Dendritic cell treated with granulocyte-macrophage colony-stimulating factor and Interleukin-4, amounts not matched to agents 40 ng/mL and 50 ng/mL, for 4 days (primary cell): ENCODE measurements at regions of chr1 and their contacts with region 1.

Region 1: GRCh38 chr1:222455188-222455879 is 92.6 kb downstream of the HHIPL2 start:
- H3K4me3 Mint-ChIP-seq: no peak overlapping the region
- H3K27ac Mint-ChIP-seq: no peak overlapping the region
- H3K4me1 Mint-ChIP-seq: no peaks in the 10 kb centered on the region
- H3K27me3 Mint-ChIP-seq: peaks cover 2% of the 10 kb centered on the region

Region 2: DNA sequence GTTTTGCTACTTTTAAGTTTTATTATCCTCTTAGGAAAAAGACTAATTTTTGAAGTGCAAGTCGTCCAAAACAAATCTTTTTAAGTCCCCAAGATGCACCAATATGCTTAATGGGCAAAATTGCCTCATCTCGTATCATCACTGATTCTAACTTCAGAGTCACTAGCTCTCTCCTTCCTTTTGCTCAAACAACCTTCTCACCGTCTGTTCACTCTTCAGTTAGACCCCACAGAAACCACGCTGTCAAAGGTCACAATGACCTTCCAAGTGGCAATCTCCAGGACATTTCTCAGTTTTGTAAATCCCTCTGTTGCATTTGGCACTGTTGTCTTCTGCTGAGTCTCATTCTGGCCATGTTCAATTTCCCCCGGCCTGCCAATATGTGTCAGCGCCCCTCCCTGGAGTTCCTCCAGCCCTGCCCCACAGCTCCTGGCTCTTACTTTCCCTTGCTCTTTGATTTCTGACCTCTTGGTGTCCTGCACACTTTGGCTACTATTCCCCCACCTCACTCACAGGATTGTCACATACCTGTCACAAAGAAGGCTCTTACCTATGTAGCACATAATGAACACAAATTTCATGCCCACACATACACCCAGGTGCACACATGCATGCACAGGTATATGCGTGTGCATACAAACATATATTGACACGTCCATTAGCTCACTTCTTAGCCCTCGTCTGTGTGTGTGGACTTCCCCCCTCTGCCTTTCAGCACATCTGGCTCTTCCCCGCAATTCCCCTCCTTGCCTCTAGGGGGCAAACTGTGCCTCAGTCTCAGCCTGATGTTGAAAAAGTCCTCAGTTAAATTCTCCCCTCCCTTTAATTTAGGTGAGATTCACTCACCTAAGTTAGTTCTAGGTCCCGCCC is 359.5 kb before region 1 on chr1:
- intact Hi-C with region 1: loop called (anchors 1 kb)
- H3K4me3 Mint-ChIP-seq: no peak overlapping the region
- H3K27ac Mint-ChIP-seq: no peak overlapping the region
- H3K4me1 Mint-ChIP-seq: no peaks in the 10 kb centered on the region
- H3K27me3 Mint-ChIP-seq: no peaks in the 10 kb centered on the region